SK-N-SH (cell line): ENCODE measurements at regions of chr22 and their contacts with region 1.

Region 1: GRCh38 chr22:33049119-33049729 is 9.0 kb downstream of the SYN3 start:
- DNase-seq: peak; percentile 78
- H3K4me3 ChIP-seq: no peak overlapping the region; a peak in 1 of 4 replicates
- H3K27ac ChIP-seq: no peak overlapping the region
- H3K4me1 ChIP-seq: no peaks in the 10 kb centered on the region
- H3K27me3 ChIP-seq: no peaks in the 10 kb centered on the region
- CTCF ChIP-seq: peak; percentile 86
- EP300 ChIP-seq: no peak
- RAD21 ChIP-seq: peak; percentile 72

Region 2: DNA sequence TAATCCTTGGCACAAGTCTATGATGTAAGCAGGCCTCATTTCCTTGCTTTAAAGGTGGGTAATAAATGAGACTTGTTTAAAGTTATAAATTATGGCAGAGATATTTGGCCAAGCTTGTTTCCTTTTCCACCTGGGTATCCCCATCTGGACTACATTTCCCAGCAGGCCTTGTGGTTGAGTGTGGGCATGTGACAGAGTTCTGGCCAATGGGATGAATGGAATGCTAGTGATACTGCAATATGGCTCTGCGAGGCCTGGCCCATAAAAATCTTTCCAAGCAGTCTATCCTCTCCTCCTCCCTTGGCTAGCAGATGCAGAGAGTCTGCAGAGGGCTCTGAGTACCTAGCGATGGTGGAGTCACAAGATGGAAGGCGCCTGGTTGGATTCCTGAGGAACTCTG is 145.2 kb before region 1 on chr22:
- CTCF ChIA-PET with region 1: no interaction called
- POLR2A ChIA-PET with region 1: no interaction called
- DNase-seq: peak; percentile 60
- H3K4me3 ChIP-seq: no peak overlapping the region
- H3K27ac ChIP-seq: no peak overlapping the region; a peak in 1 of 4 replicates
- H3K4me1 ChIP-seq: peaks cover 0 to 20% of the 10 kb centered on the region in 2 experiments; a peak in 2 of 4 replicates
- H3K27me3 ChIP-seq: no peaks in the 10 kb centered on the region
- CTCF ChIP-seq: no peak
- EP300 ChIP-seq: no peak
- RAD21 ChIP-seq: no peak

Region 3: GRCh38 chr22:32971276-32971675 is 77.9 kb before region 1 on chr22:
- CTCF ChIA-PET with region 1: no interaction called
- POLR2A ChIA-PET with region 1: no interaction called
- DNase-seq: no peak
- H3K4me3 ChIP-seq: no peak overlapping the region
- H3K27ac ChIP-seq: no peak overlapping the region
- H3K4me1 ChIP-seq: no peaks in the 10 kb centered on the region; a peak in 1 of 4 replicates
- H3K27me3 ChIP-seq: no peaks in the 10 kb centered on the region
- CTCF ChIP-seq: no peak
- EP300 ChIP-seq: no peak
- RAD21 ChIP-seq: no peak

Region 4: GRCh38 chr22:33038131-33038772 is 11.0 kb before region 1 on chr22:
- CTCF ChIA-PET with region 1: interaction called, 92 read pairs
- POLR2A ChIA-PET with region 1: no interaction called
- DNase-seq: peak; percentile 56
- H3K4me3 ChIP-seq: no peak overlapping the region
- H3K27ac ChIP-seq: no peak overlapping the region
- H3K4me1 ChIP-seq: peaks cover 0 to 3% of the 10 kb centered on the region in 2 experiments; a peak in 1 of 4 replicates
- H3K27me3 ChIP-seq: no peaks in the 10 kb centered on the region; the same call in 1 of the 2 replicates
- CTCF ChIP-seq: no peak
- EP300 ChIP-seq: no peak
- RAD21 ChIP-seq: no peak

Region 5: GRCh38 chr22:33083212-33083611 is 34.0 kb after region 1 on chr22:
- CTCF ChIA-PET with region 1: interaction called, 12 read pairs
- POLR2A ChIA-PET with region 1: no interaction called
- DNase-seq: no peak
- H3K4me3 ChIP-seq: no peak overlapping the region
- H3K27ac ChIP-seq: no peak overlapping the region
- H3K4me1 ChIP-seq: peaks cover 0 to 2% of the 10 kb centered on the region in 2 experiments; a peak in 1 of 4 replicates
- H3K27me3 ChIP-seq: no peaks in the 10 kb centered on the region
- CTCF ChIP-seq: no peak
- EP300 ChIP-seq: no peak
- RAD21 ChIP-seq: no peak

Region 6: DNA sequence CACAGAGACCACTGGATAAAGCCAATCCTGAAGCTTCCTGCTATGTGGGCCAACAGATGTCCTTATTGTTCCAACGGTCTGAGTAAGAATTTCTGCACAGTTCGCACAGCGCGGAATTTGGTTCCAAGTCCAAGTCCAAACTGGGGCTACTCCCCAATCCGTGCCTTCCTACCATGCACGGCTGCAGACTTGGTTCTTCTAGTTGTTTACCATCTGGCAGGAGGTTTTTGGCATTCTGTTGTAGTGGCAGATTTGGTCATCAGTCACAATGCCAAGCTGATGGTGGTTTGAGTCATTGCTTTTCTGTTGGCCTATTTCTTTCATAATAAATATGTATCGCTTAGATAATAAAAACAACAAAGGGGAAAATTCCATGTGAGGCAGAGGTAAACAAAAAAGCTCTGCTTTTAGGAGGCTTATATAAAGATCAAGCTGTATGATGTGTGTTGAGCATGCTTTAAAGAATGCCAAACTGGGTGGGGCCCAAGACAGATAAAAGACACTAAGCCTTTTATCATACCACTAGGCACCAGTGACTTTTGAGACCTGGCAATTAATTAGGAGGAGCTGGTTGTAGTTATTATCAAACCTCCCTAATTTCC is 61.4 kb after region 1 on chr22:
- CTCF ChIA-PET with region 1: interaction called, 10 read pairs
- POLR2A ChIA-PET with region 1: no interaction called
- DNase-seq: no peak
- H3K4me3 ChIP-seq: no peak overlapping the region
- H3K27ac ChIP-seq: no peak overlapping the region
- H3K4me1 ChIP-seq: peaks cover 0 to 10% of the 10 kb centered on the region in 2 experiments; a peak in 2 of 4 replicates
- H3K27me3 ChIP-seq: no peaks in the 10 kb centered on the region
- CTCF ChIP-seq: no peak
- EP300 ChIP-seq: no peak
- RAD21 ChIP-seq: no peak

Region 7: GRCh38 chr22:33202455-33202854 is 153.2 kb after region 1 on chr22:
- CTCF ChIA-PET with region 1: interaction called, 17 read pairs
- POLR2A ChIA-PET with region 1: no interaction called
- DNase-seq: no peak
- H3K4me3 ChIP-seq: no peak overlapping the region
- H3K27ac ChIP-seq: no peak overlapping the region
- H3K4me1 ChIP-seq: no peaks in the 10 kb centered on the region; a peak in 1 of 4 replicates
- H3K27me3 ChIP-seq: no peaks in the 10 kb centered on the region
- CTCF ChIP-seq: no peak
- EP300 ChIP-seq: no peak
- RAD21 ChIP-seq: no peak